Heart right ventricle (tissue), 16 donors: ENCODE measurements at regions of chr15 and their contacts with region 1.

Region 1: DNA sequence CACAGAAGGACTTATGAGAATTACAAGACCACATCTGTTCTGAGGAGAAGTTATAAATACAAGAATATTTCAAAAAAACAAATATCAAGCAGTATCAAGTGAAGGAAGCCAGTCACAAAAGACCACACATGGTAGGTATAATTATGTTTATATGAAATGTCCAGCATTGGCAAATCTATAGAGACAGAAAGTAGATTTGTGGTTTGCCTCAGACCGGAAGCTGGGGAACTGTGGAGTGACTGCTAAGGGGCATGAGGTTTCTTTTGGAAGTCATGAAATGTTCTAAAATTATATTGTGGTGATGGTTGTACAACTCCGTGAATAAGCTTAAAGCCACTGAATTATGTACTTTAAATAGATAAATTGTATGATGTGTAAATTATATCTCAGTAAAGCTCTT is 136.9 kb downstream of the FRMD5 start:
- DNase-seq: no peak
- ATAC-seq: no peak
- H3K4me3 ChIP-seq: no peak overlapping the region
- H3K27ac ChIP-seq: no peak overlapping the region
- H3K4me1 ChIP-seq: peaks cover 0 to 9% (median 0%) of the 10 kb centered on the region in 9 donors
- H3K27me3 ChIP-seq: peaks cover 0 to 12% (median 0%) of the 10 kb centered on the region in 7 donors
- CTCF ChIP-seq: no peak

Region 2: DNA sequence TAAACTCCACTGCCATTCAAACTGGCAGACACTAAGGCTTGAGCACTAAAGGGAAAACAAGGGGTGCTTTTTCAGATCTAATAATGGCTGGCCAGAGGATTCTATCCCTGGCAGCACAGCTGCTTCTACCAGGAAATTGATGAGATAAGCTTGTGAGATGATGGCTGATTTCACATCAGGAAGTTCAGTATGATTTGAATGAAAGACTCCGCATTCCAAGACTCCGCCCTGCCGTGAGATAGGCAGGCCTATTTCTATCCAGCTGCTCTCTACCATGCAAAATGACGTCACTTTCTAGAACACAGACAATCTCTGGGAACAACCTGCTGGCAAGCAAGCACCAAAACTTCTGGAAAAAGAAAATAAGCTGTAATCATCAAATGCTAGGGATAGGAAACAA is 59.5 kb before region 1 on chr15:
- intact Hi-C with region 1: loop called in 1 of 10 experiments (anchors 10 kb)
- DNase-seq: peak; percentile 21 to 45
- ATAC-seq: peak; percentile 58 to 94 (median 91)
- H3K4me3 ChIP-seq: peak overlapping the region in 4 of 10 donors; percentile 2 to 21 (median 12)
- H3K27ac ChIP-seq: peak overlapping the region in 5 of 10 donors; percentile 1 to 59 (median 54)
- H3K4me1 ChIP-seq: peaks cover 0 to 24% (median 13%) of the 10 kb centered on the region in 9 donors
- H3K27me3 ChIP-seq: no peaks in the 10 kb centered on the region
- CTCF ChIP-seq: no peak